ENCODE measurements at regions of chr12 and their contacts with region 1.

Region 1: GRCh38 chr12:131621701-131622421 is 89.0 kb upstream of the SFSWAP start:
- DNase-seq: no peak
- ATAC-seq: peak; percentile 46
- H3K4me3 ChIP-seq: no peak overlapping the region
- H3K27ac ChIP-seq: no peak overlapping the region
- H3K4me1 ChIP-seq: no peaks in the 10 kb centered on the region
- H3K27me3 ChIP-seq: no peaks in the 10 kb centered on the region

Region 2: DNA sequence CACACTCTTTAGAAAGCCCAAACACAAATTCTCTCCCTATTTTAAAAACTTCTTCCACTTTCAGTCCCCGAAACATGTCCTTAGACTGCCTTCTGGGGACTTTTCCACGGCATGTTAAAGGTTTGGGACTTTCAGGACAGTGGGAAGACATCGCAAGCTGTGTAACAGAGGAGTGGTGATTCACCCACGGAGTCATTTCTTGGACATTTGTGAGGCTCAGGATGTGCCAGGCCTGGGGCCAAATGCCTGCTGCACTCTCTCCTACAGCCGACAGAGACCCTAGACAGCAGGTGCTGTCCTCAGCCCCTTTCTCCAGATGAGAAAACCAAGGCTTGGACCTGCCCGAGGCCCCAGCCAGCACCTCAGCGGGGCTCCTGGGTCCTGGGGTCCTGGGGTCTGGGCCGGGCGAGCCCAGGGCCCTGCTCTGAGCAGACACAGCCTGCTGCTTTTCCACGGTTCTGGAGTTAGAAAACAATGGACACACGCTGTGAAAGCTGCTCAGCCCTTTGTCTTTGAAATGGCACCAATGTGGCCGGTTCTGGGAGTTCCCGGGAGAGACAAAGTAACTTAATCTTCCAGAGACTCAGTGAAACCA is 281.1 kb before region 1 on chr12:
- intact Hi-C with region 1: loop called (anchors 5 kb)
- DNase-seq: no peak
- ATAC-seq: no peak
- H3K4me3 ChIP-seq: no peak overlapping the region
- H3K27ac ChIP-seq: no peak overlapping the region
- H3K4me1 ChIP-seq: no peaks in the 10 kb centered on the region
- H3K27me3 ChIP-seq: no peaks in the 10 kb centered on the region

Region 3: DNA sequence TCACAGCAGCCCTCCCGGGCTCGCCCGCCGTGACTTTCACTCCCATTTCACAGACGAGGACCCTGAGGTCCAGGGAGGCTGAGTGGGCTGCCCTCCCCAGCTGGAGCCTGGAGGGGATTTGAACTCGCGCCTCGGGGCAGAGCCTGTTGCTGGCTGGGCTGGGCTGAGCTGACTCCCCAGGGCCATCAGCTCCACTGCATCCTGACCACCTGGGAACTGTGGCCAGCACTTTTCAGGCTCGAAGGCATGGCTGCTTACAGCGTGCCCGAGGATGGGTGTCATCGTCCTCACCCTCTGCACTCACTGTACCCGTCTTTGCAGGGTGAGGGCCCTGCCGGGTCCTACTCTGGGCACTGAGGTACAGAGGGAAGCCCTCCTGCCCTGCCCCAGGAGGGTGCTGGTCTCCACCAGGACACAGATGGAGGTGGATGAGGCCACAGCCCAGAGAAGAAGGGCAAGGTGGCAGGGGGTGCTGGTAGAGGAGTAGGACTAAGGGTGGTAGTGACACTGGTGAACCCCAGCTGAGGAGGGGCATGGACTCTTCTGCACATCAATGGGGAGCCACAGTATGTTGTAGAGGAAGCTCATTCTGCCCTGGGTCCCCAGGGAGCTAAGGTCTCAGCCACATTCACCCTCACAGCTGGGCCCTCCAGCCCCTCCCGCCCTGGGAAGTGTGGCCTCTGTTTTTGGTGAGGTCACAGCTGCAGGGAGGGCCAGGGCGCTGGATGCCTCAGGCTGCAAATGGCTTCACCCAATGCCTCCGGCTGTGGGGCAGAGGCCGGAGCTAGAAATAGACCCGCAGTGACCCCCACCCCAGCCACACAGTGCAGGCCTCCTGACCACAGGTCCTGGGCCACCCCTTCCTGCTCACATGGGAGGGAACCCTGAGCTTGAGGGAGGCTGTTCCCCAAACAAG is 276.1 kb before region 1 on chr12:
- intact Hi-C with region 1: loop called (anchors 5 kb)
- DNase-seq: peak in 1 of 2 donors; percentile 64
- ATAC-seq: peak; percentile 44
- H3K4me3 ChIP-seq: no peak overlapping the region
- H3K27ac ChIP-seq: no peak overlapping the region
- H3K4me1 ChIP-seq: no peaks in the 10 kb centered on the region
- H3K27me3 ChIP-seq: no peaks in the 10 kb centered on the region

Measured in aorta (tissue), 5 donors.